SK-N-SH (cell line): ENCODE measurements at regions of chr7 and their contacts with region 1.

Region 1: GRCh38 chr7:40329601-40330153 is 194.9 kb downstream of the SUGCT start:
- DNase-seq: peak; percentile 73
- H3K4me3 ChIP-seq: no peak overlapping the region
- H3K27ac ChIP-seq: peak overlapping the region; percentile 83 to 96
- H3K4me1 ChIP-seq: peaks cover 12 to 17% of the 10 kb centered on the region in 2 experiments; a peak in 3 of 4 replicates
- H3K27me3 ChIP-seq: no peaks in the 10 kb centered on the region
- CTCF ChIP-seq: peak; percentile 95
- EP300 ChIP-seq: peak; percentile 52 to 53; a peak in 2 of 4 replicates
- RAD21 ChIP-seq: peak; percentile 99

Region 2: DNA sequence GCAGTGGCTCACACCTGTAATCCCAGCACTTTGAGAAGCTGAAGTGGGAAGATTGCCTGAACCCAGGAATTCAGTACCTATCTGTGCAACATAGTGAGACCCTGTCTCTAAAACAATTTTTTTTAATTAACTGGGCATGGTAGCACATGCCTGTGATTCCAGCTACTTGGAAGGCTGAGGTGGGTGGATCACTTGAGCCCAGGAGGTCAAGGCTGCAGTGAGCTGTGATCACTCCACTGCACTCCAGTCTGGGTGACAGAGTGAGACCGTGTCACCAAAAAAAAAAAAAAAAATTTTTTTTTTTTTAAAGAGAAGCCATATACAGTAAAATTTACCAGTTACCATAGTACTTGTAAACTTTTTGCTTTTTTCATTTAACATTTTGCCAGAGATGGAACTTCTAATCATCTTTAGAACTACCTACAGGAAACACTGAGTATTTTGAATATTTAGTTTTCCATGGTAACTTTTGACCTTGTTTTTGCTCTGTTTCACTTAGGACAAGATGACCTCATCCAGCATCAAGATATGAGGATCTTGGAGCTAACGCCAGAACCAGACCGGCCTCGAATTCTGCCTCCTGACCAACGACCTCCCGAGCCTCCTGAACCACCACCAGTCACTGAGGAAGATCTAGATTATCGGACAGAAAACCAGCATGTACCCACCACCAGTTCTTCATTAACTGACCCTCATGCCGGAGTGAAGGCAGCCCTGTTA is 235.9 kb before region 1 on chr7:
- CTCF ChIA-PET with region 1: no interaction called
- POLR2A ChIA-PET with region 1: no interaction called
- DNase-seq: no peak
- H3K4me3 ChIP-seq: no peak overlapping the region
- H3K27ac ChIP-seq: no peak overlapping the region; a peak in 1 of 4 replicates
- H3K4me1 ChIP-seq: peaks cover 0 to 12% of the 10 kb centered on the region in 2 experiments; a peak in 2 of 4 replicates
- H3K27me3 ChIP-seq: no peaks in the 10 kb centered on the region
- CTCF ChIP-seq: no peak
- EP300 ChIP-seq: no peak
- RAD21 ChIP-seq: no peak

Region 3: GRCh38 chr7:40283391-40283790 is 46.3 kb before region 1 on chr7:
- CTCF ChIA-PET with region 1: no interaction called
- POLR2A ChIA-PET with region 1: no interaction called
- DNase-seq: no peak
- H3K4me3 ChIP-seq: no peak overlapping the region
- H3K27ac ChIP-seq: no peak overlapping the region
- H3K4me1 ChIP-seq: no peaks in the 10 kb centered on the region
- H3K27me3 ChIP-seq: no peaks in the 10 kb centered on the region
- CTCF ChIP-seq: no peak
- EP300 ChIP-seq: no peak
- RAD21 ChIP-seq: no peak

Region 4: DNA sequence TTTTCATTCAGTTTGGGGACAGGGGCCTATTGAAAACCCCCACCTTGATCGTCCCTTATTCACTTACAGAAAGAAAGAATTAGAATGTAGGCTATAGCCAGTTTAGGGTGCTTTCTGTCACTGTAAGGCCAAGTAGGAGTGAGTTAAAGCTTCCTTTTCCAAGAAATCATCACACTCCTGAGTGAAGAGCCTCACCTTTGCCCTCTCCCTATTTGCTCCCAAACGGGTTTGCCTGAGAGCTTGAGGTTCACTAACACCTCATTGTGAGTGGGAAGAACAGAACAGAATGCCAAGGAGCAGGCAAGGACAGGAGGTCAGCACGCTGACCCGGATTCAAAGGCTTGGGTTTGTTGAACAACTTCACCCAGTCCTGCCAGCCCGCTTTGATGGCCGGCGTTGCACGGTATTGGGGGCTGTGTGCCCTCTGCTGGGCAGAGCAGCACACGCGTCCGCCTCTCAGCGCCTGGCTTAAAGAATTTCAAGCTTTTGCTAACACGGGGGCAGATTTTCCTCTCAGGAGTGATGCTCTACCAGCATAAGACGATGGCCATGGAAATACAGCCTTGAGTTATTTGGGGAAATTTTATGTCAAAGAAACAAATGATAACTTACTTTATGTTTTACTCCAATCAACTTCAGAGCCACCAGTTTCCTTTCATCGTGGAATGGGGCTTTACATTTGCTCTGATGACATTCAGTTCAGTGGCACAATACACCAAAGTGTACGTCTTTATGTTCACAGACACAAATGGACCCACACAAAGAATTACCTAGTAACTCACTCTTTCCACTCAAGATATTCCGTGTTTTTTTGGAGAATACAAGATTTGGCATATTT is 275.1 kb after region 1 on chr7:
- CTCF ChIA-PET with region 1: interaction called, 31 read pairs
- POLR2A ChIA-PET with region 1: no interaction called
- DNase-seq: peak; percentile 61
- H3K4me3 ChIP-seq: peak overlapping the region in 1 of 2 experiments; percentile 1; a peak in 1 of 4 replicates
- H3K27ac ChIP-seq: no peak overlapping the region
- H3K4me1 ChIP-seq: peaks cover 0 to 12% of the 10 kb centered on the region in 2 experiments; a peak in 2 of 4 replicates
- H3K27me3 ChIP-seq: no peaks in the 10 kb centered on the region
- CTCF ChIP-seq: peak; percentile 60
- EP300 ChIP-seq: no peak
- RAD21 ChIP-seq: peak; percentile 79

Region 5: GRCh38 chr7:41711283-41712064 is 1381.8 kb after region 1 on chr7:
- CTCF ChIA-PET with region 1: interaction called, 96 read pairs
- POLR2A ChIA-PET with region 1: no interaction called
- DNase-seq: peak; percentile 41
- H3K4me3 ChIP-seq: no peak overlapping the region
- H3K27ac ChIP-seq: no peak overlapping the region
- H3K4me1 ChIP-seq: peaks cover under 1 to 4% of the 10 kb centered on the region in 2 experiments; a peak in 2 of 4 replicates
- H3K27me3 ChIP-seq: no peaks in the 10 kb centered on the region
- CTCF ChIP-seq: peak; percentile 54
- EP300 ChIP-seq: no peak
- RAD21 ChIP-seq: peak; percentile 53